Naive thymus-derived CD4-positive, alpha-beta T cell (primary cell): ENCODE measurements at regions of chr17 and their contacts with region 1.

Region 1: DNA sequence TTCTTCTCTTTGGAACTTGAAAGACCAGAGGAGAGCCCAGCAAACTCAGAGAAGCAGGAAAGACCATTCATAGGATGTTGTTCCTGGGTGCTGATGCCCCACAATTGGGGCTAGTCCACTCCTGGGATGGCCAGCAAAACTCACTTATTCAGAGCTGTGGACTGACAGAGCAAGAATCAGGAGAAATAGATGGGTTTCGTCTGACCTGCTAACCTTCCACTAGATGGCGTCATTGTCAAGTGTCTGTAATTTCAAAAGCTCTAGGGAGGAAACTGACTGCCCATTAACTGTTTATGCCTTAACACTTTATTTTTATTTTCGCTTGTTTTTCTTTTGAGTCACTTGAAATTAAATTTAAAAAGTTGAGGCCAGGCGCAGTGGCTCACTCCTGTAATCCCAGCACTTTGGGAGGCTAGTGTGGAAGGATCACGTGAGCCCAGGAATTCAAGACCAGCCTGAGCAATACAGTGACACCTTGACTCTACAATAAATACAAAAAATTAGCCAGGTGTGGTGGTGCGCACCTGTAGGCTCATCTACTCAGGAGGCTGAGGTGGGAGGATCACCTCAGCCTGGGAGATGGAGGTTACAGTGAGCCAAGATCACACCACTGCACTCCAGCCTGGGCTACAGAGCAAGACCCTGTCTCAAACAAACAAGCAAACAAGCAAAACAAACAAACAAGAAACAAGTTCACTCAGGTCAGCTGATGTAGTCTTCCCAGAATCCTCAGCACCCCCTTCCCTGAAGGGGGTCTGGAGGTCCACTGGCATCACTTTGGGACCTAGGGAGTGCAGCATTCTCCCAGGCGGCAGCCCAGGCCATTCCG is 28.6 kb upstream of the MILR1 start:
- DNase-seq: peak in 7 of 9 donors; percentile 54 to 83 (median 75)
- ATAC-seq: peak; percentile 88
- H3K4me3 ChIP-seq: no peak overlapping the region
- H3K4me3 Mint-ChIP-seq: no peak overlapping the region
- H3K27ac ChIP-seq: no peak overlapping the region
- H3K27ac Mint-ChIP-seq: no peak overlapping the region
- H3K4me1 ChIP-seq: no peaks in the 10 kb centered on the region
- H3K4me1 Mint-ChIP-seq: peaks cover 0 to 11% (median 0%) of the 10 kb centered on the region in 7 donors
- H3K27me3 ChIP-seq: peaks cover 0 to 3% of the 10 kb centered on the region in 2 donors
- H3K27me3 Mint-ChIP-seq: peaks cover 0 to 5% (median 0%) of the 10 kb centered on the region in 5 donors

Region 2: DNA sequence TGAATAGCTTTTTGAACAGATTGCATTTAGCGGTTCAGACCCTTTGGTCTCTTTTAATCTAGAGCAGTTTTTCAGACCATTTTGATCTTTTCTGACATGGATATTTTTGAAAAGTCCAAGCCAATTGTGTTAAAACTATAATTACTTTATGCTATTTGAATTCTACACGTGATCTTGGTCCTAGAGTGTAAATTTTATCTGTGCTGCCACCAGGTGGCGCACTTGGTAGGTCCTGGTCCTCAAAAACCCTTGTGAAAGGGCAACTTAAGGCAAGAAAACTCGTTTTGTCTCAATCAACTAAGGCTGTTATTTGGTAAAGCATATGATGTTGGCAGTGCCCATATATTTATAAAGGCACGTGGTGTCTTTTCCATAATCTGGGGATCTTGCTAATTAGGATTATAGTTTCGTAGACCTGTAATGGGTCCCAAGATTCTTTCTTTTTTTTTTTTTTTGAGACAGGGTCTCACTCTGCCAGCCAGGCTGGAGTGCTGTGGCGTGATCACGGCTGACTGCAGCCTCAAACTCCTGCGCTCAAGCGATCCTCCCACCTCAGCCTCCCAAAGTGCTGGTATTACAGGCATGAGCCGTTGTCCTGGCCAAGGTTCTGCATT is 113.4 kb before region 1 on chr17:
- CTCF ChIA-PET with region 1: interaction called, 182 read pairs
- POLR2A ChIA-PET with region 1: interaction called, 4 read pairs
- intact Hi-C with region 1: loop called (anchors 1 kb)
- DNase-seq: peak; percentile 51 to 77 (median 65)
- ATAC-seq: peak; percentile 82
- H3K4me3 ChIP-seq: no peak overlapping the region
- H3K4me3 Mint-ChIP-seq: no peak overlapping the region
- H3K27ac ChIP-seq: no peak overlapping the region
- H3K27ac Mint-ChIP-seq: peak overlapping the region in 2 of 9 donors; percentile 8 to 22
- H3K4me1 ChIP-seq: no peaks in the 10 kb centered on the region
- H3K4me1 Mint-ChIP-seq: peaks cover 0 to 4% (median 0%) of the 10 kb centered on the region in 7 donors
- H3K27me3 ChIP-seq: no peaks in the 10 kb centered on the region
- H3K27me3 Mint-ChIP-seq: peaks cover 0 to 2% (median 0%) of the 10 kb centered on the region in 5 donors

Region 3: GRCh38 chr17:64326395-64327054 is 93.8 kb before region 1 on chr17:
- CTCF ChIA-PET with region 1: interaction called, 182 read pairs
- POLR2A ChIA-PET with region 1: interaction called, 25 read pairs
- intact Hi-C with region 1: loop called (anchors 1 kb)
- DNase-seq: no peak
- ATAC-seq: peak; percentile 54
- H3K4me3 ChIP-seq: no peak overlapping the region
- H3K4me3 Mint-ChIP-seq: no peak overlapping the region
- H3K27ac ChIP-seq: no peak overlapping the region
- H3K27ac Mint-ChIP-seq: peak overlapping the region in 7 of 9 donors; percentile 19 to 87 (median 76)
- H3K4me1 ChIP-seq: no peaks in the 10 kb centered on the region
- H3K4me1 Mint-ChIP-seq: peaks cover 5 to 44% (median 32%) of the 10 kb centered on the region in 7 donors
- H3K27me3 ChIP-seq: no peaks in the 10 kb centered on the region
- H3K27me3 Mint-ChIP-seq: no peaks in the 10 kb centered on the region

Region 4: DNA sequence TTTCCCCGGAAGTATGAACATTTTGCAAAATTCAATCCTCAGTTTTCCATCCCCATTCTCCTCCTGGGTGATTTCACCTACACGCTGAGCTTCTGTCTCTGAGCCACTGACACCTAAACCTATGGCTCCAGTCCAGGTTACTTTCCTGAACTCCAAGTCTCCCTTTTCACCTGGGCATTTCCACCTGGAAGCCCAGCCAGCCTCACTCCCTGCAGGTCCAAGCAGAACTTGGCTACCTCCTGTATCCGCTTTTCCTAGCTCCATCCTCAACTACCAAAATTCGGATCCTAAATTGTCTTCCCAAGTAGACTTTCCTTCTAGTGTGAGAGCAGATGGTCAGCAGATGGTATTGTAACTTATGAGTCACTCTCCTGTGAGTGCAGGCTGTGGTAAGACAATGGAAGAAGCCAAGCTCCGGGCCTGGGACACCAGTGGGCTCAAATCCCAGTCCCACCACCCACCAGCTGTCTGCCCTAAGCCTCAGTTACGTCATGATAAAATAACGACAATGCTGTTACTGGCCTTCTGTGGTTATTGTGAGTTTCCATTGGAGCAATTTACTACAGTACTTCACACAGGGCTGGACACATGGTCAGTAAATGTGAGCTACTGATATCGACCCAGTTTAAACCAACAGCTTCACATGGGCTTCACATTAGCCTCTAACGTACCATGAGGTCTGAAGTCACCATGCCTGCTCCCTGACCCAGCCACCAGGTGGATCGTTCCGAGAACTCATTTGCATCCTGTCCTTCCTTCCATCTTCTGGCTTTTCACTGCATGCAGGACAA is 63.0 kb before region 1 on chr17:
- CTCF ChIA-PET with region 1: interaction called, 4 read pairs
- POLR2A ChIA-PET with region 1: no interaction called
- intact Hi-C with region 1: loop called in 1 of 2 experiments (anchors 2 kb)
- DNase-seq: no peak
- ATAC-seq: no peak
- H3K4me3 ChIP-seq: no peak overlapping the region
- H3K4me3 Mint-ChIP-seq: no peak overlapping the region
- H3K27ac ChIP-seq: no peak overlapping the region
- H3K27ac Mint-ChIP-seq: peak overlapping the region in 8 of 9 donors; percentile 38 to 89 (median 58)
- H3K4me1 ChIP-seq: no peaks in the 10 kb centered on the region
- H3K4me1 Mint-ChIP-seq: peaks cover 10 to 32% (median 26%) of the 10 kb centered on the region in 7 donors
- H3K27me3 ChIP-seq: no peaks in the 10 kb centered on the region
- H3K27me3 Mint-ChIP-seq: peaks cover 0 to 2% (median 0%) of the 10 kb centered on the region in 5 donors

Region 5: GRCh38 chr17:64491034-64491859 is 70.9 kb after region 1 on chr17:
- CTCF ChIA-PET with region 1: interaction called, 131 read pairs
- POLR2A ChIA-PET with region 1: interaction called, 32 read pairs
- intact Hi-C with region 1: loop called (anchors 1 kb)
- DNase-seq: peak in 7 of 9 donors; percentile 35 to 56 (median 44)
- ATAC-seq: peak; percentile 82
- H3K4me3 ChIP-seq: no peak overlapping the region
- H3K4me3 Mint-ChIP-seq: peak overlapping the region in 1 of 10 donors; percentile 14
- H3K27ac ChIP-seq: no peak overlapping the region
- H3K27ac Mint-ChIP-seq: no peak overlapping the region
- H3K4me1 ChIP-seq: peaks cover 12 to 15% of the 10 kb centered on the region in 2 donors
- H3K4me1 Mint-ChIP-seq: peaks cover 19 to 40% (median 28%) of the 10 kb centered on the region in 7 donors
- H3K27me3 ChIP-seq: no peaks in the 10 kb centered on the region
- H3K27me3 Mint-ChIP-seq: no peaks in the 10 kb centered on the region

Region 6: GRCh38 chr17:64599187-64599676 is 178.9 kb after region 1 on chr17:
- CTCF ChIA-PET with region 1: interaction called, 4 read pairs
- POLR2A ChIA-PET with region 1: no interaction called
- intact Hi-C with region 1: loop called (anchors 1 to 5 kb)
- DNase-seq: peak; percentile 21 to 60 (median 39)
- ATAC-seq: peak; percentile 99
- H3K4me3 ChIP-seq: no peak overlapping the region
- H3K4me3 Mint-ChIP-seq: peak overlapping the region; percentile 65 to 86 (median 76)
- H3K27ac ChIP-seq: peak overlapping the region; percentile 40
- H3K27ac Mint-ChIP-seq: peak overlapping the region; percentile 64 to 95 (median 79)
- H3K4me1 ChIP-seq: peaks cover 8 to 14% of the 10 kb centered on the region in 2 donors
- H3K4me1 Mint-ChIP-seq: peaks cover 27 to 52% (median 38%) of the 10 kb centered on the region in 7 donors
- H3K27me3 ChIP-seq: no peaks in the 10 kb centered on the region
- H3K27me3 Mint-ChIP-seq: no peaks in the 10 kb centered on the region

Region 7: DNA sequence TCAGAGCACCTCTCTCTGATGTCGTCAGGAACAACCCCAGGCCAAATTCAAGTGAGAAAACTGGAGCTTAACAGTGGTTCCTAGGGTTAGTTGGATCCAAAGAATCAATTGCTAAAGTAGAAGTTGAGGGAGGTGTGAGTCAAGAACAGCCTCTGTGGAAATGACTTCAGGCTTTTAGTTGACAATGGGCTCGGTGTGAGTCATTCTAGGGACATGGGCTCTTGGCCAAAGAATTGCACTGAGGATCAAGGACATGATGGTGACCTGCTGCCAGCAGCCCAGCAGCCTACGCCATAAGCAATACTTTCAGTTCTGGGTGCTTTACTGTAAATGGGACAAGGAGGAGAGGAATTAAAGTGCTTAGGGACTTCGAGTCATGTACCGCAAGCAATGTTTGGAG is 273.9 kb after region 1 on chr17:
- CTCF ChIA-PET with region 1: no interaction called
- POLR2A ChIA-PET with region 1: no interaction called
- intact Hi-C with region 1: no loop called
- DNase-seq: no peak
- ATAC-seq: peak; percentile 69
- H3K4me3 ChIP-seq: no peak overlapping the region
- H3K4me3 Mint-ChIP-seq: no peak overlapping the region
- H3K27ac ChIP-seq: no peak overlapping the region
- H3K27ac Mint-ChIP-seq: no peak overlapping the region
- H3K4me1 ChIP-seq: no peaks in the 10 kb centered on the region
- H3K4me1 Mint-ChIP-seq: peaks cover 0 to 4% (median 0%) of the 10 kb centered on the region in 7 donors
- H3K27me3 ChIP-seq: no peaks in the 10 kb centered on the region
- H3K27me3 Mint-ChIP-seq: peaks cover 0 to 8% (median 0%) of the 10 kb centered on the region in 5 donors

Region 8: DNA sequence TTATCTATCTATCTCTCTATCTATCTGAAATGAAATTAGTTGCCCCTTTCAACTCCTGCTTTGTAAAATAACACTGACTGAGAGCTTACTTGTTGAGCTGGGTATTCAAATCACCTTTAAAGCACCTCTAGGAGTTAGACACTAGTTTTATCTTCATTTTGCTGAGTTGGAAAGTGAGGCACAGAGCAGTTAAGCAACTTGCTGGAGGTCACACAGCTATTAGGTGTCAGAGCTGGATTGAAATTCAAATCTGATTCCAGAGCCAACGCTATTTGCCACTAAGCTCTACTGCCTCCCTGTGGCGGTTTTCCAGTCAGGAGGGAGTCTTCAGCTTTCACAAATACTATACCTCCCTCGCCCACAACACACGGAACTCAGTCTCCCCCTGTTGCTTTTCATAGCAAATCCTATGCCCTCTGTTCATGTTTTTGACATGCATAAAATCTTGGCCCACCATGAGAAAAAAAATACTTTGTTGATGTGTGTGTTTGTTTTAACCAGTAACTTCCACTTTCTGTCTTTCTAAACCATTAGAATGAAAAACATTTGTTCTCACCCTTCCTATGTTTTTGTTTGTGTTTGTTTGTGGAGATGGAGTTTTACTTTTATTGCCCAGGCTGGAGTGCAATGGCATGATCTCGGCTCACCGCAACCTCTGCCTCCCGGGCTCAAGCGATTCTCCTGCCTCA is 316.6 kb after region 1 on chr17:
- CTCF ChIA-PET with region 1: interaction called, 11 read pairs
- POLR2A ChIA-PET with region 1: no interaction called
- intact Hi-C with region 1: loop called in 1 of 2 experiments (anchors 1 kb)
- DNase-seq: peak in 8 of 9 donors; percentile 15 to 59 (median 53)
- ATAC-seq: peak; percentile 78
- H3K4me3 ChIP-seq: no peak overlapping the region
- H3K4me3 Mint-ChIP-seq: peak overlapping the region in 1 of 10 donors; percentile 39
- H3K27ac ChIP-seq: no peak overlapping the region
- H3K27ac Mint-ChIP-seq: peak overlapping the region in 3 of 9 donors; percentile 8 to 59 (median 9)
- H3K4me1 ChIP-seq: peaks cover 0 to 12% of the 10 kb centered on the region in 2 donors
- H3K4me1 Mint-ChIP-seq: peaks cover 6 to 26% (median 18%) of the 10 kb centered on the region in 7 donors
- H3K27me3 ChIP-seq: no peaks in the 10 kb centered on the region
- H3K27me3 Mint-ChIP-seq: no peaks in the 10 kb centered on the region